ENCODE measurements at regions of chr12 and their contacts with region 1.

Region 1: DNA sequence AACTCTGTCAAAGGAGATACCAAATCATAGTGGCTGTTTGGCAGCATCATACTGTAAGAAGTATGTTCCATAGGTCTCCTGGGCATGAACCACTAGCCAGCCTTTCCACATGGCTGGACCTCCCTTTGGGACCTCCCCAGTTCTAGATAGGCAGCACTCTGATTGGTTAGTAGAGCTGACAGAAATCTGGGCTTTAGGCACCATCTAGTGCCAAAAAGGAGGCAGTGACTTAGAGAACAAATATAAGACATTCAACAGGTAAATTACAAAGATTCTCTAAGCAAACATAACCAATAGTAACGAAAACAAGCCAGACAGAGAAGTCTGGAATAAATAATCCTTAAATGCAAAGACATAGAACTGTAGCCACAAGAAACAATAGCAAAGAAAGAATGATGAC is 148.0 kb upstream of the PDE3A start:
- DNase-seq: peak; percentile 28
- H3K4me3 ChIP-seq: no peak overlapping the region
- H3K27ac ChIP-seq: no peak overlapping the region
- H3K4me1 ChIP-seq: no peaks in the 10 kb centered on the region
- CTCF ChIP-seq: peak; percentile 60

Region 2: DNA sequence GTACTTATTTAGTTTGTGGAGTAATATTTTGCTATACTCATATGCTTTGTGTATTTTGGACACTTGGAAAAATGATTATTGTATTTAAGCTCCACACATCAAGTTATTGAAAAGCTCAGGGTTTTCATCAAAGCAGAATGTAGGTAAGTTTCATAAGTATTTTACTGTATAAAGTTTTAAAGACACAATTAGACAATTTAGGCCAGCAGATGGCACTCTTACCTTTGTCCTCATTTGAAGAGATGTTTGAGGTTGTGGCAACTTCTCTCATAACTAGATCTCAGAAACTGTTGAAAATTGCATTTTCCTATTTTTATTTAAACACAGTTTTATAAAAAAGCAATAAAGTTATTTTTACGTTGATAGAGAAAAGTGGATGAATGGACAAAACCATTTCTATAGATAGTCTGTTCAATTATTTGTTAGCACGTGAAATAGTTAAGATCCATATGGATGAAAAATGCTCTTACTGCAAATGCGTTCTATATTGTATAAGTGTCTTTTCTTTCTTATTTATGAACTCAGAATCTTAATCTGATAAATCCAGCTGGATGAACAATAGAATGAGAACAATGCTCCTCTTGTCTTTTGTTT is 481.1 kb before region 1 on chr12:
- CTCF ChIA-PET with region 1: no interaction called
- POLR2A ChIA-PET with region 1: no interaction called
- intact Hi-C with region 1: loop called (anchors 2 kb)
- DNase-seq: peak; percentile 45
- H3K4me3 ChIP-seq: no peak overlapping the region
- H3K27ac ChIP-seq: no peak overlapping the region
- H3K4me1 ChIP-seq: no peaks in the 10 kb centered on the region
- CTCF ChIP-seq: peak; percentile 89

Region 3: DNA sequence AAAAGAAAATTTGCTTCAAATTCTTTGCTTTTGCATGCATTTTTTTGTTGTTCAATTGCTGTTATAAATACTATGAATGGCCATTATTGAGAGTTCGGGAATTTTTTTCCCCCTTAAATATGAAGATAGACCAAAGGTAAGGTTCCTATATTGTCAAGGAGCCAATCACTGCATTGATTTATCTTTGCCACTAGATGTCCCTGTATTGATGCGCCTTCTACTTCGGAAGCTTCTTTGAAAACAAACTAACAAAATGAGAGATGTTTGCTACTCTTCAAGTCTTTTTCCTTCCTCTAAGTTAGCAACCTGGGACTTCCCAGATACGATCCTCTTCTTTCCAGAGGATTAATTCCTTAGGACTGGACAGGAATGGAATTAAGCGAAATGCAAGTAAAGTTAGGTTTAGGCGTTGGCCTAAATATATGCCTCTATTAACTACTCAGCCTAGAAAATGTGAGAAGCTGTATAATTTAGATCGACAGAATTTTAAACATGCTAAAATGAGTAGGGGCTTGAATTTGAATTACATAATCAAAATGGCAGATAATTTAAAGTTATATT is 462.9 kb before region 1 on chr12:
- CTCF ChIA-PET with region 1: no interaction called
- POLR2A ChIA-PET with region 1: no interaction called
- intact Hi-C with region 1: loop called (anchors 5 kb)
- DNase-seq: peak; percentile 26
- H3K4me3 ChIP-seq: no peak overlapping the region
- H3K27ac ChIP-seq: no peak overlapping the region
- H3K4me1 ChIP-seq: no peaks in the 10 kb centered on the region
- CTCF ChIP-seq: peak; percentile 84

Region 4: GRCh38 chr12:19915392-19916195 is 304.7 kb before region 1 on chr12:
- CTCF ChIA-PET with region 1: no interaction called
- POLR2A ChIA-PET with region 1: no interaction called
- intact Hi-C with region 1: loop called (anchors 1 kb)
- DNase-seq: no peak
- H3K4me3 ChIP-seq: no peak overlapping the region
- H3K27ac ChIP-seq: no peak overlapping the region
- H3K4me1 ChIP-seq: no peaks in the 10 kb centered on the region
- CTCF ChIP-seq: peak; percentile 64

Region 5: GRCh38 chr12:20122274-20122673 is 98.1 kb before region 1 on chr12:
- CTCF ChIA-PET with region 1: no interaction called
- POLR2A ChIA-PET with region 1: no interaction called
- intact Hi-C with region 1: loop called (anchors 2 kb)
- DNase-seq: no peak
- H3K4me3 ChIP-seq: no peak overlapping the region
- H3K27ac ChIP-seq: no peak overlapping the region
- H3K4me1 ChIP-seq: no peaks in the 10 kb centered on the region
- CTCF ChIP-seq: 0 out of 2 replicates have a peak, but pooled peaks have one; percentile 17

Region 6: GRCh38 chr12:20174528-20175175 is 45.7 kb before region 1 on chr12:
- CTCF ChIA-PET with region 1: no interaction called
- POLR2A ChIA-PET with region 1: no interaction called
- intact Hi-C with region 1: no loop called
- DNase-seq: no peak
- H3K4me3 ChIP-seq: no peak overlapping the region
- H3K27ac ChIP-seq: no peak overlapping the region
- H3K4me1 ChIP-seq: no peaks in the 10 kb centered on the region
- CTCF ChIP-seq: no peak

Measured in OCI-LY7 (cell line).